B cell (primary cell): ENCODE measurements at regions of chr6 and their contacts with region 1.

Region 1: GRCh38 chr6:157764178-157765033 is 58.6 kb upstream of the SNX9 start:
- DNase-seq: peak; percentile 90
- ATAC-seq: peak; percentile 51
- H3K4me3 ChIP-seq: peak overlapping the region; percentile 13 to 56 (median 30)
- H3K4me3 Mint-ChIP-seq: peak overlapping the region; percentile 69
- H3K27ac ChIP-seq: peak overlapping the region; percentile 84
- H3K27ac Mint-ChIP-seq: peak overlapping the region; percentile 97
- H3K4me1 ChIP-seq: peaks cover 88 to 95% of the 10 kb centered on the region in 2 donors
- H3K4me1 Mint-ChIP-seq: peaks cover 88% of the 10 kb centered on the region
- H3K27me3 ChIP-seq: no peaks in the 10 kb centered on the region
- H3K27me3 Mint-ChIP-seq: no peaks in the 10 kb centered on the region
- CTCF ChIP-seq: no peak

Region 2: GRCh38 chr6:157379656-157380454 is 384.6 kb before region 1 on chr6:
- CTCF ChIA-PET with region 1: no interaction called
- POLR2A ChIA-PET with region 1: no interaction called
- intact Hi-C with region 1: loop called (anchors 10 kb)
- DNase-seq: peak; percentile 90
- ATAC-seq: peak; percentile 74
- H3K4me3 ChIP-seq: peak overlapping the region; percentile 42 to 99 (median 93)
- H3K4me3 Mint-ChIP-seq: peak overlapping the region; percentile 80
- H3K27ac ChIP-seq: peak overlapping the region; percentile 55 to 80
- H3K27ac Mint-ChIP-seq: peak overlapping the region; percentile 69
- H3K4me1 ChIP-seq: peaks cover 24 to 32% of the 10 kb centered on the region in 2 donors
- H3K4me1 Mint-ChIP-seq: peaks cover 26% of the 10 kb centered on the region
- H3K27me3 ChIP-seq: peaks cover 0 to 12% (median 5%) of the 10 kb centered on the region in 4 experiments
- H3K27me3 Mint-ChIP-seq: peaks cover 8% of the 10 kb centered on the region
- CTCF ChIP-seq: no peak

Region 3: GRCh38 chr6:157494132-157494710 is 270.2 kb before region 1 on chr6:
- CTCF ChIA-PET with region 1: no interaction called
- POLR2A ChIA-PET with region 1: no interaction called
- intact Hi-C with region 1: no loop called
- DNase-seq: no peak
- ATAC-seq: no peak
- H3K4me3 ChIP-seq: no peak overlapping the region
- H3K4me3 Mint-ChIP-seq: no peak overlapping the region
- H3K27ac ChIP-seq: no peak overlapping the region
- H3K27ac Mint-ChIP-seq: no peak overlapping the region
- H3K4me1 ChIP-seq: peaks cover 13 to 41% of the 10 kb centered on the region in 2 donors
- H3K4me1 Mint-ChIP-seq: peaks cover 38% of the 10 kb centered on the region
- H3K27me3 ChIP-seq: no peaks in the 10 kb centered on the region
- H3K27me3 Mint-ChIP-seq: peaks cover 5% of the 10 kb centered on the region
- CTCF ChIP-seq: no peak

Region 4: DNA sequence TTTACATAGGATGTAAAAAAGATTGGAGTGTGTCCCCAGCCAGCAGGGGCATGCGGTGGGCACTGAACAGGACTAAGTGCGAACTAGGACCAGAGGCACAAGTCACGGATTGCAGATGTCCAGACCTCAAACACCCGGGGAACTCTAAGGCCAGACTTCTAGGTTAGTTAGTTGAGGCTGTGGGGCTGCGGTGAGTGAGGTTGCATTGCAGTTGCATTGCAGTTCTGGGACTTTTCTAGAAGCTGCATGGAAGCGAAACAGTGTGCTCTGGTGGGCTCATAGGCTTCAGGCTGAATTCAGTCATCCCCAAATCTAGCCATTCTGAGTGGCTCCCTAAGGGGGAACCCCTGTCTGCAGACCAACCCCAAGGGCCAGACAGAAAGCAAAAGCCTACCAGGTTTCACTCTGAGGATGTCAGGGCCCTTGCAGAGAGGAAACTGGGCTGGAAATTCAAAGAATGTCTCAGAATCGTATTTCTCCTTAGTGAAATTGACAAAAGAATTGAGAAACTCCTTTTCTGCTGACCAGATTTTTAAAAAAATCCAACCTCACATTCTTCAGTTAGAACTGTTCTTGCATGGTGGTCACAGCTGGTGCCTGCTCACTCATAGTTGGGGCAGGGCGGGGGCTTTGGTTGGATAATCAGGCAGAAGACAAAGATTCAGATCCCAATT is 200.7 kb before region 1 on chr6:
- CTCF ChIA-PET with region 1: no interaction called
- POLR2A ChIA-PET with region 1: no interaction called
- intact Hi-C with region 1: loop called (anchors 1 kb)
- DNase-seq: peak; percentile 68
- ATAC-seq: peak; percentile 31
- H3K4me3 ChIP-seq: no peak overlapping the region
- H3K4me3 Mint-ChIP-seq: peak overlapping the region; percentile 56
- H3K27ac ChIP-seq: peak overlapping the region; percentile 11 to 45
- H3K27ac Mint-ChIP-seq: peak overlapping the region; percentile 90
- H3K4me1 ChIP-seq: peaks cover 80 to 84% of the 10 kb centered on the region in 2 donors
- H3K4me1 Mint-ChIP-seq: peaks cover 72% of the 10 kb centered on the region
- H3K27me3 ChIP-seq: no peaks in the 10 kb centered on the region
- H3K27me3 Mint-ChIP-seq: no peaks in the 10 kb centered on the region
- CTCF ChIP-seq: no peak

Region 5: DNA sequence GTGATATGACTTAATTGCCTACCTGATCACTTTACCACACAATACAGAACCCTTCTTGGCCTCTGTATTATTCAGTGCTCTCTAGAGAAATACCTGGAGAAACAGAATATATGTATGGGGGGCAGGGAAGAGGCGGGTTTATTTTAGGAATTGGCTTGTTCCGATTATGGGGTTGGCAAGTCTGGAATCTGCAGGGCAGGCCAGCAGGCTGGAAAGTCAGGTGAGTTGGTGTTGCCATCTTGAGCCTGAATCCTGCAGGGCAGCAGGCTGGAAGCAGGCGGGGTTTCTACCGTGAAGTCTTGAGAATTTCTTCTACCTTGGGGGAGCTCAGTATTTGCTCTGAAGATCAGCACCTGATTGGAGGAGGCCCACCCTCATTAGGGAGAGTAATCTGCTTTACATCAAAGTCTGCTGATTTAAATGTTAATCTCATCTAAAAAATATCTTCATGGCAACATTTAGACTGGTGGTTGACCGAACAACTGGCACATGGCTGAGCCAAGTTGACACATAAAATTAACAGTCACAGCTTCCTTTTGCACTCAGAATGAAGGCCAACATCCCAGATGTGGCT is 189.5 kb before region 1 on chr6:
- CTCF ChIA-PET with region 1: no interaction called
- POLR2A ChIA-PET with region 1: no interaction called
- intact Hi-C with region 1: no loop called
- DNase-seq: no peak
- ATAC-seq: no peak
- H3K4me3 ChIP-seq: no peak overlapping the region
- H3K4me3 Mint-ChIP-seq: no peak overlapping the region
- H3K27ac ChIP-seq: no peak overlapping the region
- H3K27ac Mint-ChIP-seq: no peak overlapping the region
- H3K4me1 ChIP-seq: peaks cover 29 to 43% of the 10 kb centered on the region in 2 donors
- H3K4me1 Mint-ChIP-seq: peaks cover 57% of the 10 kb centered on the region
- H3K27me3 ChIP-seq: no peaks in the 10 kb centered on the region
- H3K27me3 Mint-ChIP-seq: no peaks in the 10 kb centered on the region
- CTCF ChIP-seq: no peak

Region 6: DNA sequence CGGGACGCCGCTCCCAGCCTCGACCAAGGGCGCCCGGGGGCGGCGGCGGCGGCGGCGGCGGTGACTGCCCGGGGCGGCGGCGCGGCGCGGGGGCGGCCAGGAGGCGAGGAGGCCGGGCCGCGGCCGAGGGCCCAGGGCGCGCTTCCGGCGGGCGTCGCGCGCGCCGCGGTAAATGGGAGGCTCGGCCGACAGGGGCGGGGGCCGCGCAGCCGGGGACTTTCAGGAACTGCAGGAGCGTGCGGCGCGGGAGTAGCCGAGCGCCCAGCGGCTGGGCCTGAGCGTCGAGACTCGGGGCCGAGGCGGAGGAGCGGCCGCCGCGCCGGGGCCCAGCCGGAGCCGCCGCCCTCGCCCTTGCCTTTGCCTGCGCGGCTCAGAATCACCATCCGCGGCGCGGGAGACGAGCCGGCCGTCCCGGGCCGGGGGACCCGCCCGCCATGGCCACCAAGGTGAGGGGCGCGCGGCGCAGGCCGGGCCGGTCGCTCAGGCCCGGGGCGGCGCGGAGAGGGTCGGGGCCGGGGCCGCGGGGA is 58.7 kb after region 1 on chr6 and contains the start of gene SNX9:
- CTCF ChIA-PET with region 1: interaction called, 4 read pairs
- POLR2A ChIA-PET with region 1: interaction called, 4 read pairs
- intact Hi-C with region 1: loop called (anchors 1 kb)
- DNase-seq: peak; percentile 85
- ATAC-seq: peak; percentile 67
- H3K4me3 ChIP-seq: peak within 1 kb of the TSS; percentile 62 to 91 (median 86)
- H3K4me3 Mint-ChIP-seq: peak within 1 kb of the TSS; percentile 94
- H3K27ac ChIP-seq: peak within 1 kb of the TSS; percentile 74 to 95
- H3K27ac Mint-ChIP-seq: peak within 1 kb of the TSS; percentile 97
- H3K4me1 ChIP-seq: peaks cover 16 to 17% of the 10 kb centered on the region in 2 donors
- H3K4me1 Mint-ChIP-seq: peaks cover 43% of the 10 kb centered on the region
- H3K27me3 ChIP-seq: no peaks in the 10 kb centered on the region
- H3K27me3 Mint-ChIP-seq: no peaks in the 10 kb centered on the region
- CTCF ChIP-seq: no peak
- total RNA-seq, gene SNX9: 50.7 and 53.0 TPM in 2 replicates

Region 7: GRCh38 chr6:157981395-157982296 is 217.2 kb after region 1 on chr6 and contains the start of gene SYNJ2:
- CTCF ChIA-PET with region 1: no interaction called
- POLR2A ChIA-PET with region 1: interaction called, 3 read pairs
- intact Hi-C with region 1: loop called (anchors 5 kb)
- DNase-seq: peak; percentile 89
- ATAC-seq: peak; percentile 89
- H3K4me3 ChIP-seq: peak within 1 kb of the TSS; percentile 50 to 87 (median 77)
- H3K4me3 Mint-ChIP-seq: peak within 1 kb of the TSS; percentile 93
- H3K27ac ChIP-seq: peak within 1 kb of the TSS in 1 of 2 donors; percentile 72
- H3K27ac Mint-ChIP-seq: peak within 1 kb of the TSS; percentile 85
- H3K4me1 ChIP-seq: peaks cover 30 to 48% of the 10 kb centered on the region in 2 donors
- H3K4me1 Mint-ChIP-seq: peaks cover 40% of the 10 kb centered on the region
- H3K27me3 ChIP-seq: no peaks in the 10 kb centered on the region
- H3K27me3 Mint-ChIP-seq: no peaks in the 10 kb centered on the region
- CTCF ChIP-seq: peak; percentile 66
- total RNA-seq, gene SYNJ2: 11.4 and 12.8 TPM in 2 replicates

Region 8: DNA sequence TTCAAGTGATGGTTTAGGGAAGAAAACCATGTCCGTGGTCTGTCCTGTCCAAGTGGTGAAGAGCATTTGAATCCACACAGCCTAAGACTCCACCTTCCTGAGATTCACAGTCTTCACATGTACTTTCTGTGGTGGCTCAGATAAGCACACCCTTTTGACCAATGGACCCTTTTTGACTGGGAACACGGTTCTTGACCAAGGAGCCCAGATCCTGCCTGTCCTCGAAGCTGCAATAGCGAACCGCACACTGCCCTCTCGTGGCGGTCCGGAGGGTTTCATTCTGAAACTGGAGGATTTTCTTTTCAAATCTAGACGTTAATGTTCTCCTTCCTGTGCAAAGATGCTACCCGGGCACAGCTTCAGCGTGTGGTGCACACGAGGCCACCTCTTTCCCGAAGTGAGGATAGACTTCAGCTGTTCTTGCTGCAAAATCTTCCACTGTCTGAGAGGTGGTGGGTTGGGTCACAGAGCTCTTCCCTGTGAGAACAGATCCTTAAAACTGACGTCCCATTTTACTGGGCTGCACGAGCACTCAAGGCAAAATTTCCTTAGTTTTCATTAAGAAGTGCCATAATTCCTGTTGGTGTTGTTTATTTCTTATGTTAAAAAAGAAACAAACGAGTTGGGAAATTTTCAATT is 307.8 kb after region 1 on chr6:
- CTCF ChIA-PET with region 1: interaction called, 3 read pairs
- POLR2A ChIA-PET with region 1: no interaction called
- intact Hi-C with region 1: loop called (anchors 2 kb)
- DNase-seq: peak; percentile 71
- ATAC-seq: peak; percentile 63
- H3K4me3 ChIP-seq: no peak overlapping the region
- H3K4me3 Mint-ChIP-seq: no peak overlapping the region
- H3K27ac ChIP-seq: no peak overlapping the region
- H3K27ac Mint-ChIP-seq: peak overlapping the region; percentile 22
- H3K4me1 ChIP-seq: peaks cover 0 to 5% of the 10 kb centered on the region in 2 donors
- H3K4me1 Mint-ChIP-seq: peaks cover 2% of the 10 kb centered on the region
- H3K27me3 ChIP-seq: no peaks in the 10 kb centered on the region
- H3K27me3 Mint-ChIP-seq: no peaks in the 10 kb centered on the region
- CTCF ChIP-seq: peak; percentile 85